Mammary epithelial cell (primary cell): ENCODE measurements at regions of chr17 and their contacts with region 1.

Region 1: GRCh38 chr17:72421128-72422092 is 300.6 kb downstream of the SOX9 start:
- DNase-seq: peak; percentile 98
- H3K4me3 ChIP-seq: no peak overlapping the region
- H3K27ac ChIP-seq: peak overlapping the region; percentile 92
- H3K4me1 ChIP-seq: peaks cover 52% of the 10 kb centered on the region
- H3K27me3 ChIP-seq: no peaks in the 10 kb centered on the region
- CTCF ChIP-seq: no peak

Region 2: DNA sequence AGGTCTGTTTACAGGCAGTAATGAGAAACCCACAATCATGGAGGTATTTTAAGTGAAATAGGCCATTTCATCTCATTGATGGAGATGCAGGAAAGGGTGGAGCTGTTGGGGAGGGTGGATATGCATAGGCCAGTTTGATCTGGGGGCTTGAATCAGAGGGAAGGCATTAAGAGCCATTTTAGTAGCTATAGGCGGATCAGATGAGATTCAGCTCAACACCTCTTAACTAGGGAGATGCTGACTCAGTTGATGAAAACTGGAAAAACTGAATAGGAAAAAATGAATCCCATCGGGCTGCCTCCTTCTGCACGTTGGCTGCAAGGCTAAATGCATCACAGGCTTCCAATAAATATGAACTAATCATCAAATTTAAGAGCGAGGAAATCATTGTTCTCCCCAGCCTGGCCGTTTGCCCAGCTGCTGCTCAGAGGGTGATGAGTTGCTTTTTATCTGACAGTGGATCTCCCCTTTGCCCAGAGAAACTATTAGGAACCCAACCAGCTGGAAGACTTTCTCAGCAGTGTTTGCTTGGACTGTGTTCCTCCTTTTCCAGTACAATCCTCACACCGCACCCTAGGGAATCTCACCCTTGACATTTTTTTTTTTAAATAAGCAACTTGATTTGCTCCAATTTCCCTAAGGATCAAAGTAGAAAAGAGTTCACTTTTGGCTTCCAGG is 151.0 kb before region 1 on chr17:
- CTCF ChIA-PET with region 1: no interaction called
- dilution Hi-C with region 1: no loop called
- in situ Hi-C with region 1: no loop called
- intact Hi-C with region 1: loop called (anchors 10 kb)
- DNase-seq: peak; percentile 85
- H3K4me3 ChIP-seq: no peak overlapping the region
- H3K27ac ChIP-seq: no peak overlapping the region
- H3K4me1 ChIP-seq: peaks cover 39% of the 10 kb centered on the region
- H3K27me3 ChIP-seq: no peaks in the 10 kb centered on the region
- CTCF ChIP-seq: no peak

Region 3: DNA sequence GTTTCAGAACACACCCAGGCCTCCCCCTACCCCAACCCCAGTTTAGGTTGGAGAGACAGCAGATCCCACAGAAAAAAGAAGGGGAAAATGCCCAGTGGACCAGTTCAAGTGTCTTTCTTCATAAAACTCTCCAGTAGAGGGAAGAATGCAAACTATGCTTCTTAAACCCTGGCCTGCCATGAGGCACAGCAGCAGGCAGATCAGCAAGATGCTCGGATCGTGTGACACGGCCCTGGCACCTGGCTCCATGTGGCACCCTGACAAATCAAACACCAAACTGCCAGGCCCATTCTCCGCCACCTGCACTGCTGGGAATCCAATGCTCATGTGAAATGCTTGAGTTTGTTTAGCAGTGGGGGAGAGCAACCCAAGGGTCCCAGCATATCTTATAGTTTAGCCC is 133.8 kb before region 1 on chr17:
- CTCF ChIA-PET with region 1: no interaction called
- dilution Hi-C with region 1: no loop called
- in situ Hi-C with region 1: no loop called
- intact Hi-C with region 1: no loop called
- DNase-seq: no peak
- H3K4me3 ChIP-seq: no peak overlapping the region
- H3K27ac ChIP-seq: no peak overlapping the region
- H3K4me1 ChIP-seq: peaks cover 6% of the 10 kb centered on the region
- H3K27me3 ChIP-seq: no peaks in the 10 kb centered on the region
- CTCF ChIP-seq: no peak

Region 4: GRCh38 chr17:72392056-72393010 is 29.1 kb before region 1 on chr17:
- CTCF ChIA-PET with region 1: no interaction called
- dilution Hi-C with region 1: no loop called
- in situ Hi-C with region 1: no loop called
- intact Hi-C with region 1: loop called (anchors 1 kb)
- DNase-seq: no peak
- H3K4me3 ChIP-seq: no peak overlapping the region
- H3K27ac ChIP-seq: peak overlapping the region; percentile 76
- H3K4me1 ChIP-seq: peaks cover 68% of the 10 kb centered on the region
- H3K27me3 ChIP-seq: no peaks in the 10 kb centered on the region
- CTCF ChIP-seq: no peak

Region 5: DNA sequence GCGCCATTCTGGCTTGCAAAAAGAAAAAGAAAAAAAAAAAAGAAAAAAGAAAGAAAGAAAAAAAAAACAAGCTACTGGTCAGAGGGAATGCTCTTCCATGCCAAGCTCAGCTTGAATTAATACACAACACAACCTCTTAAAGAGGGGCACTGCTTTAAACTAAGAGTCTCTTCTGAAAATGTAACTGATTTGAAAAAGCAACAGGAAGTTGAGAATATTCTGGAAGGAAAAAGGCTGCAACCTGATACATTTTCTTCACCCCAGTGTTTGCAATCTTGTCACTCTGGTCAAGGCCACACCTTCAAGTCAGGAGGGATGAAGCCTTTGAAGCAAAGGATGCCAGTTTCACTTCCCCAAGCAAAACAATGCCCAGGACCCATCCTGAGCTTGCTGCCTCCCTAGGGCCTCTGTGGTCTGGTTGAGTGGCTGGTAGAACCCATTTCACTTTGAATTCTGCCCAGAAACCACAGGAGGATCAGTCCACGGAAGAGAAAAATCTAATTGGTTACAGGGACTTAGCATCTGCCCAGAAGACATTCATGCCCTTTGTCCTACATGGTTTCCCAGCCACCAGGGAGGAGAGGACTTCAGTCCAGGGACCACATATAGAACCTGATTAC is 89.1 kb after region 1 on chr17:
- CTCF ChIA-PET with region 1: no interaction called
- dilution Hi-C with region 1: no loop called
- in situ Hi-C with region 1: no loop called
- intact Hi-C with region 1: loop called (anchors 5 kb)
- DNase-seq: no peak
- H3K4me3 ChIP-seq: no peak overlapping the region
- H3K27ac ChIP-seq: no peak overlapping the region
- H3K4me1 ChIP-seq: no peaks in the 10 kb centered on the region
- H3K27me3 ChIP-seq: no peaks in the 10 kb centered on the region
- CTCF ChIP-seq: no peak